A549 (cell line): ENCODE measurements at regions of chr17 and their contacts with region 1.

Region 1: GRCh38 chr17:65294179-65294720 is 157.1 kb downstream of the RGS9 start:
- DNase-seq: peak; percentile 77 to 89
- ATAC-seq: peak; percentile 96 to 99
- H3K4me3 ChIP-seq: no peak overlapping the region
- H3K27ac ChIP-seq: no peak overlapping the region
- H3K4me1 ChIP-seq: no peaks in the 10 kb centered on the region
- CTCF ChIP-seq: peak; percentile 86
- EP300 ChIP-seq: no peak
- POLR2A ChIP-seq: no peak
- RAD21 ChIP-seq: peak; percentile 93 to 94

Region 2: GRCh38 chr17:65268832-65269231 is 25.4 kb before region 1 on chr17:
- CTCF ChIA-PET with region 1: interaction called, 41 read pairs
- POLR2A ChIA-PET with region 1: no interaction called
- DNase-seq: no peak
- ATAC-seq: no peak
- H3K4me3 ChIP-seq: no peak overlapping the region
- H3K27ac ChIP-seq: no peak overlapping the region
- H3K4me1 ChIP-seq: no peaks in the 10 kb centered on the region
- CTCF ChIP-seq: no peak
- EP300 ChIP-seq: no peak
- POLR2A ChIP-seq: no peak
- RAD21 ChIP-seq: no peak

Region 3: GRCh38 chr17:65307081-65307960 is 13.1 kb after region 1 on chr17:
- CTCF ChIA-PET with region 1: interaction called, 16 read pairs
- POLR2A ChIA-PET with region 1: no interaction called
- DNase-seq: no peak
- ATAC-seq: peak; percentile 42 to 64; a peak in 3 of 6 replicates
- H3K4me3 ChIP-seq: no peak overlapping the region
- H3K27ac ChIP-seq: no peak overlapping the region
- H3K4me1 ChIP-seq: no peaks in the 10 kb centered on the region
- CTCF ChIP-seq: no peak
- EP300 ChIP-seq: no peak
- POLR2A ChIP-seq: no peak
- RAD21 ChIP-seq: no peak

Region 4: GRCh38 chr17:65556014-65556909 is 262.0 kb after region 1 on chr17:
- CTCF ChIA-PET with region 1: interaction called, 37 read pairs
- POLR2A ChIA-PET with region 1: no interaction called
- DNase-seq: peak; percentile 69 to 78
- ATAC-seq: peak; percentile 21 to 81; a peak in 3 of 6 replicates
- H3K4me3 ChIP-seq: no peak overlapping the region
- H3K27ac ChIP-seq: peak overlapping the region in 1 of 2 experiments; percentile 37; a peak in 3 of 6 replicates
- H3K4me1 ChIP-seq: peaks cover 31% of the 10 kb centered on the region
- CTCF ChIP-seq: peak; percentile 87
- EP300 ChIP-seq: no peak
- POLR2A ChIP-seq: no peak
- RAD21 ChIP-seq: peak; percentile 69 to 70

Region 5: GRCh38 chr17:65988081-65988850 is 694.0 kb after region 1 on chr17:
- CTCF ChIA-PET with region 1: interaction called, 23 read pairs
- POLR2A ChIA-PET with region 1: no interaction called
- DNase-seq: peak; percentile 14 to 62
- ATAC-seq: peak in 1 of 2 experiments; percentile 63; a peak in 3 of 6 replicates
- H3K4me3 ChIP-seq: no peak overlapping the region
- H3K27ac ChIP-seq: no peak overlapping the region
- H3K4me1 ChIP-seq: no peaks in the 10 kb centered on the region
- CTCF ChIP-seq: peak; percentile 46
- EP300 ChIP-seq: no peak
- POLR2A ChIP-seq: no peak
- RAD21 ChIP-seq: peak; percentile 79 to 85